ENCODE measurements at regions of chr3 and their contacts with region 1.

Region 1: DNA sequence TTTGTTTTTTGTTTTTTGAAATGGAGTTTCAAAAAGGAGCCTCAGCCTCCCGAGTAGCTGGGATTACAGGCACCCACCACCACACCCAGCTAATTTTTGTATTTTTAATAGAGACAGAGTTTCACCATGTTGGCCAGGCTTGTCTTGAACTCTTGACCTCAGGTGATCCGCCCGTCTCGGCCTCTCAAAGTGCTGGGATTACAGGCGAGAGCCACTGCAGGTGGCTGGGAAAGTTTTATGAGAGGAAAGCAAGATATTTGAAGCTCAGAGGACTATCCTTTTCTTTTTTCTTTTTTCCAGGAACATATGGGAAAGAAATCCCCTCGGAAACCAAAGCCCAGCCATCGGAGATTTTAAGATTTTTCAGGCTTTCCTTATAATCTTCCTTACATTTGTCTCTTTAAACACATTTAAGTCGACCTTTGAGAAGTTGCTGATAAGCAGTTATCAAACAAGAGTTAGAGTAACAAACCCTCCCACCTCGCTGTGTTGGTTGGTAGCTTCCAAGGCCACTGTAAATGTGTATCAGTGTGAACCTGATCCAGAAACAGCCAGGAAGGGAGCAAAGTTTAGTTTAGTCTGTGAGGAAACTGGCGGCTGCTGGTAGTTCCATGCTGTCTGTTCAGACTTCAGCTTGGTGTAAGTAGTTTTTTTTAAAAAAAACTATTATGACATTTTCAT is 34.5 kb upstream of the MAP3K13 start:
- DNase-seq: peak; percentile 82 to 89
- H3K4me3 ChIP-seq: peak overlapping the region; percentile 53
- H3K4me3 Mint-ChIP-seq: peak overlapping the region; percentile 75
- H3K27ac Mint-ChIP-seq: peak overlapping the region; percentile 79
- H3K4me1 ChIP-seq: peaks cover 24% of the 10 kb centered on the region
- H3K4me1 Mint-ChIP-seq: peaks cover 6% of the 10 kb centered on the region
- H3K27me3 ChIP-seq: no peaks in the 10 kb centered on the region
- H3K27me3 Mint-ChIP-seq: no peaks in the 10 kb centered on the region
- CTCF ChIP-seq: no peak

Region 2: GRCh38 chr3:185316738-185317407 is 11.6 kb before region 1 on chr3:
- CTCF ChIA-PET with region 1: no interaction called
- POLR2A ChIA-PET with region 1: no interaction called
- intact Hi-C with region 1: loop called (anchors 1 kb)
- DNase-seq: peak in 1 of 2 experiments; percentile 32
- H3K4me3 ChIP-seq: no peak overlapping the region
- H3K4me3 Mint-ChIP-seq: peak overlapping the region; percentile 64
- H3K27ac Mint-ChIP-seq: peak overlapping the region; percentile 90
- H3K4me1 ChIP-seq: peaks cover 28% of the 10 kb centered on the region
- H3K4me1 Mint-ChIP-seq: peaks cover 15% of the 10 kb centered on the region
- H3K27me3 ChIP-seq: no peaks in the 10 kb centered on the region
- H3K27me3 Mint-ChIP-seq: no peaks in the 10 kb centered on the region
- CTCF ChIP-seq: no peak

Region 3: GRCh38 chr3:185353823-185354614 is 25.6 kb after region 1 on chr3:
- CTCF ChIA-PET with region 1: no interaction called
- POLR2A ChIA-PET with region 1: interaction called, 3 read pairs
- intact Hi-C with region 1: loop called (anchors 2 kb)
- DNase-seq: peak; percentile 89 to 91
- H3K4me3 ChIP-seq: no peak overlapping the region
- H3K4me3 Mint-ChIP-seq: no peak overlapping the region
- H3K27ac Mint-ChIP-seq: no peak overlapping the region
- H3K4me1 ChIP-seq: no peaks in the 10 kb centered on the region
- H3K4me1 Mint-ChIP-seq: no peaks in the 10 kb centered on the region
- H3K27me3 ChIP-seq: no peaks in the 10 kb centered on the region
- H3K27me3 Mint-ChIP-seq: no peaks in the 10 kb centered on the region
- CTCF ChIP-seq: peak; percentile 67 to 81

Measured in Caco-2 (cell line).